ENCODE measurements at regions of chr10 and their contacts with region 1.

Region 1: GRCh38 chr10:102776779-102777456 is 33.2 kb downstream of the WBP1L start:
- DNase-seq: peak; percentile 89 to 93
- H3K4me3 ChIP-seq: peak overlapping the region; percentile 49 to 59
- H3K27ac ChIP-seq: peak overlapping the region; percentile 83 to 95
- H3K4me1 ChIP-seq: peaks cover 13 to 98% (median 88%) of the 10 kb centered on the region in 4 donors
- H3K27me3 ChIP-seq: no peaks in the 10 kb centered on the region
- CTCF ChIP-seq: peak in 1 of 2 experiments; percentile 17

Region 2: GRCh38 chr10:102815790-102816549 is 39.1 kb after region 1 on chr10:
- intact Hi-C with region 1: loop called (anchors 2 kb)
- DNase-seq: peak; percentile 82 to 88
- H3K4me3 ChIP-seq: no peak overlapping the region
- H3K27ac ChIP-seq: peak overlapping the region; percentile 90 to 96
- H3K4me1 ChIP-seq: peaks cover 0 to 60% (median 41%) of the 10 kb centered on the region in 4 donors
- H3K27me3 ChIP-seq: no peaks in the 10 kb centered on the region
- CTCF ChIP-seq: no peak

Measured in tibial artery (tissue), 4 donors.